PC-9 (cell line): ENCODE measurements at regions of chr12 and their contacts with region 1.

Region 1: GRCh38 chr12:89352492-89353187 is at the start of gene DUSP6:
- DNase-seq: peak; percentile 93 to 99
- H3K4me3 ChIP-seq: peak within 1 kb of the TSS; percentile 77
- H3K27ac ChIP-seq: peak within 1 kb of the TSS; percentile 93
- H3K4me1 ChIP-seq: peaks cover 40% of the 10 kb centered on the region
- H3K27me3 ChIP-seq: no peaks in the 10 kb centered on the region
- CTCF ChIP-seq: no peak
- total RNA-seq, gene DUSP6: 14.1 and 18.3 TPM in 2 replicates

Region 2: GRCh38 chr12:89019408-89020120 is 333.1 kb before region 1 on chr12:
- CTCF ChIA-PET with region 1: no interaction called
- POLR2A ChIA-PET with region 1: no interaction called
- intact Hi-C with region 1: loop called (anchors 1 kb)
- DNase-seq: peak; percentile 68 to 71
- H3K4me3 ChIP-seq: peak overlapping the region; percentile 51
- H3K27ac ChIP-seq: no peak overlapping the region
- H3K4me1 ChIP-seq: peaks cover 10% of the 10 kb centered on the region; the same call in 1 of the 2 replicates
- H3K27me3 ChIP-seq: no peaks in the 10 kb centered on the region
- CTCF ChIP-seq: peak; percentile 92

Region 3: DNA sequence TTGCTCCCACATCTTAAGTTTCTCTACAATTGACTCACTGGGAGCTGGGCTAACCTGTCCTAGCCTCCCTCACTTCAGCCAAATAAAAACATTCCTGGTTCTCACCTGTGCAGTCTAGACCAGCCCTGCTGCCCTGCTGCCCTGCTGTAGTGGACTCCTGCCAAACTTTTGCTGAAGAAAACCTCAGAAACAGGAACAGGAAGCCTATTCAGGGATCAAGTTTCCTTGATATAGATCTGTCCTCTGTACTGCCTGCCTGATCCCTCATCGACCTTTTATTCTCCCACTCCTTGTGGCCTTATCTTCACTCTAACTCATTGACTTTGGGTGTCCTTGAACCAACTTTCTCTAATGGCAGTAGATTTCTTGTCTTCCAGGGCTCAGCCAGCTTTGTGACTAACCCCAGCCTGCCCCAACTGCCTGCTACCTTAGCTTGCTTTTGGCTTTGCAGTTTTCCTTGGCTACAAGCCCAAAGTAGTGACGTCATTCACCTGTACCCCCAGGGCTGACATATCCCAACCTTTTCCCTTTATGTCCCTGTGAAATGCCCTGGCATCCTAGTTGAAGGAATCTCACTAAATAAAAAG is 235.1 kb before region 1 on chr12:
- CTCF ChIA-PET with region 1: no interaction called
- POLR2A ChIA-PET with region 1: interaction called, 3 read pairs
- intact Hi-C with region 1: loop called (anchors 1 kb)
- DNase-seq: peak; percentile 84 to 95
- H3K4me3 ChIP-seq: no peak overlapping the region
- H3K27ac ChIP-seq: peak overlapping the region; percentile 79
- H3K4me1 ChIP-seq: peaks cover 29% of the 10 kb centered on the region
- H3K27me3 ChIP-seq: no peaks in the 10 kb centered on the region
- CTCF ChIP-seq: no peak

Region 4: DNA sequence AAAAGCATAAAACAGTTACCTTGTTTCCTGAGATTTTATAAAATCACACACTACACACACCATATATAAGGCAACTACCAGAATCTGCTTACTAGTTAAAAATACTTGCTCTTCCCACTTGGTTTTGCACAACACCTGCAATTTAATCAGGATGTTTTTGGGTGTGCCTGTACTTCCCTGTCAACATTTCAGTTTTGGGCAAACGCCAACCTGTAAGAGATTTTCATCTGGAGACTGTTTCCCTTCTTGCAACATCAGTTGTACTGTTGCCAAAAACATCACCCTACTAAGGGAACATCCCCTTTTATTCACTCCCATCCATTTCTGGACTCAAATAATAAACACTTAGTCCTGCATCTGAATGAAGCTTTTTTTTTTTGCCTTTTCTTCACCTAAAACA is 172.7 kb before region 1 on chr12:
- CTCF ChIA-PET with region 1: no interaction called
- POLR2A ChIA-PET with region 1: no interaction called
- intact Hi-C with region 1: loop called (anchors 1 kb)
- DNase-seq: peak; percentile 50 to 88
- H3K4me3 ChIP-seq: no peak overlapping the region
- H3K27ac ChIP-seq: peak overlapping the region; percentile 68
- H3K4me1 ChIP-seq: peaks cover 56% of the 10 kb centered on the region
- H3K27me3 ChIP-seq: no peaks in the 10 kb centered on the region
- CTCF ChIP-seq: no peak

Region 5: GRCh38 chr12:89236748-89237388 is 115.8 kb before region 1 on chr12:
- CTCF ChIA-PET with region 1: no interaction called
- POLR2A ChIA-PET with region 1: interaction called, 3 read pairs
- intact Hi-C with region 1: loop called (anchors 1 kb)
- DNase-seq: peak; percentile 28 to 96
- H3K4me3 ChIP-seq: peak overlapping the region; percentile 26; the same call in 1 of the 2 replicates
- H3K27ac ChIP-seq: peak overlapping the region; percentile 87
- H3K4me1 ChIP-seq: peaks cover 37% of the 10 kb centered on the region
- H3K27me3 ChIP-seq: no peaks in the 10 kb centered on the region
- CTCF ChIP-seq: no peak

Region 6: GRCh38 chr12:89382328-89382727 is 29.7 kb after region 1 on chr12:
- CTCF ChIA-PET with region 1: no interaction called
- POLR2A ChIA-PET with region 1: no interaction called
- intact Hi-C with region 1: no loop called
- DNase-seq: no peak
- H3K4me3 ChIP-seq: no peak overlapping the region
- H3K27ac ChIP-seq: no peak overlapping the region
- H3K4me1 ChIP-seq: peaks cover 33% of the 10 kb centered on the region
- H3K27me3 ChIP-seq: no peaks in the 10 kb centered on the region
- CTCF ChIP-seq: no peak

Region 7: DNA sequence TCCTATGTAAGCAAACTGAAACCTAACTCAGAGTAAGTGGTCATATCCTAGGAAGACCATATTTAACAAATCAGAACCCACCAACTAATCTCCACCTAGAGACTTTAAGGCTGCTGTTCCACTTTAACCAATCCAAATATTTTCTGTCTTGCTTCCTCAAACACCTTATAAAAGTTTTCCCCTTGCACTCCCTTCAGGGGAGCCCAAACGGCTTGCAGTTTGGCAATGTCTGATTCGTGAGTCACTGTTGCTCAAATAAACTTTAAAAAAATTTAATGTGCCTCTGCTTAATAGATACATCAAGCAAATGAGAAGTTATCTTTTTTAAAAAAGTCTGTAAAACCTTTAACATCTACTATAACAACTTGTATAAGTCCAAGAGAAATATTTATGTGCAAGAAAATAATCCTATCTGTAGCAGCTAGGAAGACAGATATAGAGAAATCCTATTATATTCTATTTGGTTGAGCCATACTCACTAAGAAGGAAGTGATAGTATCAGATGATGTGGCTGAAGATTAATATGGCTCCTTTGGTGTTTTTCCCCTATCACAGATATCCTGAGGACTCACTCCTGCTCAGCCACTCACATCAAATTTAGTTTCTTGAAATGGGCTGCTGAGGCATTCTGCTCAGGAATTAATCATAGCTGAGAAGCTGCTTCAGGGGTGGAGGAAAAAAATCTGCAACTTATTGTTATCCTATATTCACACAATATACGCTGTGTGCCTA is 64.8 kb after region 1 on chr12:
- CTCF ChIA-PET with region 1: no interaction called
- POLR2A ChIA-PET with region 1: no interaction called
- intact Hi-C with region 1: loop called (anchors 5 kb)
- DNase-seq: peak; percentile 9 to 80
- H3K4me3 ChIP-seq: no peak overlapping the region
- H3K27ac ChIP-seq: peak overlapping the region; percentile 58
- H3K4me1 ChIP-seq: peaks cover 29% of the 10 kb centered on the region
- H3K27me3 ChIP-seq: no peaks in the 10 kb centered on the region
- CTCF ChIP-seq: no peak

Region 8: GRCh38 chr12:89524541-89525285 is 172.1 kb after region 1 on chr12 and contains the start of gene GALNT4:
- CTCF ChIA-PET with region 1: no interaction called
- POLR2A ChIA-PET with region 1: interaction called, 10 read pairs
- intact Hi-C with region 1: loop called (anchors 1 kb)
- DNase-seq: peak; percentile 70 to 82
- H3K4me3 ChIP-seq: peak within 1 kb of the TSS; percentile 98
- H3K27ac ChIP-seq: peak within 1 kb of the TSS; percentile 14; the same call in 1 of the 2 replicates
- H3K4me1 ChIP-seq: peaks cover 22% of the 10 kb centered on the region
- H3K27me3 ChIP-seq: no peaks in the 10 kb centered on the region
- CTCF ChIP-seq: peak; percentile 75
- total RNA-seq, gene GALNT4: 3.2 and 3.7 TPM in 2 replicates